BJ (cell line): ENCODE measurements at regions of chr2 and their contacts with region 1.

Region 1: DNA sequence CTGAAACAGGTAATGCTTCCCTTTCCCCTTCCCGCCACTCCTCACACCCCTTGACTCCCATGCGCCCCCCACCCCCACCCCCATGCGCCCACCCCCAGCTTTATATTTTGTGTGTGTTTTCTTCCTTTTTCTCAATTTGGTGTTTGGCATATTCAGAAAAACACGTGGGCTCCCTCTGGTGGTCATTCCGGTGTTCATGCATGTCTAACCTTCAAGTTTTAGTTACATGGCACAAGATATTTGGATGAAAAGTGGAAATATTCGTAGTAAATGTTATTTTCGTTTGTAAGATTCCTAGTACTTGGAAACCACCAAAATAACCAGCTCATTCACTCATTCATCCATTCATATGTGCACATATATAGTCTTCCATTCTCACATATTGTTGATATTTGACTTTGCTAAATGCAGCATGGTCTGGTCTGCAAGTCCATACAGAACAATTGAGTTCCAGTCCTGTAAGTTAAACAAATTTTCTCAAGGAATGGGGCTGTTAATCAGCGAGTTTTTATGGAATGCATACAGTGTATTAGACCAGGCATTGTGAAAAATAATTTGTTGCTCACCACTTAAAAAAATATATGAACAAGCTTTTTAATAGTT is 143.6 kb upstream of the MAP3K20 start:
- DNase-seq: no peak
- H3K4me3 ChIP-seq: no peak overlapping the region
- H3K27me3 ChIP-seq: no peaks in the 10 kb centered on the region
- CTCF ChIP-seq: peak; percentile 72

Region 2: DNA sequence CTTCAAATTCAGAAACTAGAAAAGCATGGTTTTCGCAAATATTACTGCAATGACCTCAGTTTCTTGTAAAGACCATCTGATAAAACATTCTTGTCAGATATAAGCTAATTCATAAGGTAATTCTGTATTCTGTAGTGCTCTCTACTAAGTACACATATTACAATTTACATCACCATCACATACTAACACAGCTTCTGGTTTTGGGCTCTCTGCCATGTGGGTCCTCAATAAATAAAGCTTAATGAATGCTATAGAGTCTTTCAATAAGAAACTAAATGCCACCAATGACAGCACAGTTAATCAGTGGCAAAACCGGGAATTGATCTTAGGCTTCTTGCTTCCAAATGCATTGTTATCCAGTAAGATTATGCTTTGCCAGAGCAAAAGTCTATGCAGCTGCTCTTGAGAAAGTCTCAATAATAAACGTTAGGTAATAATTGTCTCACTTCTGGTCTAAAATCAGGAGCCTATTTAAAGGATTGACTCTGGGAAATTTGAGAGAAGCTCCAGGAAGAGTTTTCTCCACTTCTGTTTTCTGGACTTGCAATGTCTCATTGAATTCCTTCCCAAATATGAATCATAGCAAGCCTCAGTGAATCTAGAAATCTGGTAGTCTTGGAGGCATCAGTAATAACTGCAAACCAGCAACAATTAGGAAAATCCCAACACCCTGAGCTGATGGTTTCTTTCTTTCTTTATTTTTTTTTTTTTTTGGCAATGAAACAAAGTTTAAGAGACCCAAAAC is 264.3 kb before region 1 on chr2:
- CTCF ChIA-PET with region 1: no interaction called
- POLR2A ChIA-PET with region 1: no interaction called
- DNase-seq: no peak
- H3K4me3 ChIP-seq: no peak overlapping the region
- H3K27me3 ChIP-seq: no peaks in the 10 kb centered on the region
- CTCF ChIP-seq: no peak

Region 3: DNA sequence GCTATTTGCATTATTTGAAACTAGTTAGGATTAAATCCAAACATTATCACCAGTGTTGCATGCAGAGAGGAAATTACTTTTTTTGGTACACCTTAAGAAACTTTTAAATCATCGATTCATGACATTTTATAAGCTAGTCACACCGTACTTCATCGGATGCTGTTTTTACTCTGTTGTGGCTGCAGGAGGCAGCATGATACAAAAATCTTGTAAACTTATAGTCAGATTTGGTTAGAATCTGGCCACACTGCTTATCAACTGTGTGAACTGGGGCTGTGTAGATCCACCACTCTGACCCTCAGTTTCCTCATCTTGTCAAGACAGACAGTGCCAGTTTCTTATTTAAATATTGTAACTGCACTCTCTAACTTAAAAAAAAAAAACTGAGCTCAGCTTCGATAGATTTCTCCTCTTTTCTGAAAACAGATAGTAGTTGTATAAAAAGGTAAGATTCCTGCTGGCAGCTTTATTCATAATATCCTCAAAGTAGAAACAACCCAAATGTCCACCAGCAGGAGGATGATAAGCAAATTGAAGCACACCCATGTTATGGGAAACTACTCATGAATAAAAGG is 118.6 kb before region 1 on chr2:
- CTCF ChIA-PET with region 1: interaction called, 88 read pairs
- POLR2A ChIA-PET with region 1: no interaction called
- DNase-seq: no peak
- H3K4me3 ChIP-seq: no peak overlapping the region
- H3K27me3 ChIP-seq: peaks cover 2% of the 10 kb centered on the region
- CTCF ChIP-seq: peak; percentile 60

Region 4: DNA sequence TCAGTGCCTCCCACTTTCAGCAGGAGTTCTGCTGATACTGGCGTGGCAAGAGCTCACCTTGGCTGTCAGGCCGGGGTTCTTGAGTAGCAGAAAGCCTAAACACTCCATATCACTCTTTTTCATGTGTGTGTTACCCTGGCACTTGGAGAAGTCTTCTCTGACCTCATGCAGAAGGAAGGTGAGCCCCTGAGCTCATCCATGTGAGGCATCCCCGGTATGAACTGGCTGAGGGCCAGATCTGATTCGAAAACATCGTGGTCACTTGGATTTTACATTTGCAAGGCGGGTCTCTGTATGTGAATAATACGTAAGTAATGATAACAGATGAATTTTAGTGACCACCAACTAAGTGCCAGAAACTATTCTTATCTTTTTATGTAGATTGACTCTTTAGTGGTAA is 102.8 kb before region 1 on chr2:
- CTCF ChIA-PET with region 1: interaction called, 20 read pairs
- POLR2A ChIA-PET with region 1: no interaction called
- DNase-seq: peak; percentile 64
- H3K4me3 ChIP-seq: no peak overlapping the region
- H3K27me3 ChIP-seq: no peaks in the 10 kb centered on the region
- CTCF ChIP-seq: no peak

Region 5: DNA sequence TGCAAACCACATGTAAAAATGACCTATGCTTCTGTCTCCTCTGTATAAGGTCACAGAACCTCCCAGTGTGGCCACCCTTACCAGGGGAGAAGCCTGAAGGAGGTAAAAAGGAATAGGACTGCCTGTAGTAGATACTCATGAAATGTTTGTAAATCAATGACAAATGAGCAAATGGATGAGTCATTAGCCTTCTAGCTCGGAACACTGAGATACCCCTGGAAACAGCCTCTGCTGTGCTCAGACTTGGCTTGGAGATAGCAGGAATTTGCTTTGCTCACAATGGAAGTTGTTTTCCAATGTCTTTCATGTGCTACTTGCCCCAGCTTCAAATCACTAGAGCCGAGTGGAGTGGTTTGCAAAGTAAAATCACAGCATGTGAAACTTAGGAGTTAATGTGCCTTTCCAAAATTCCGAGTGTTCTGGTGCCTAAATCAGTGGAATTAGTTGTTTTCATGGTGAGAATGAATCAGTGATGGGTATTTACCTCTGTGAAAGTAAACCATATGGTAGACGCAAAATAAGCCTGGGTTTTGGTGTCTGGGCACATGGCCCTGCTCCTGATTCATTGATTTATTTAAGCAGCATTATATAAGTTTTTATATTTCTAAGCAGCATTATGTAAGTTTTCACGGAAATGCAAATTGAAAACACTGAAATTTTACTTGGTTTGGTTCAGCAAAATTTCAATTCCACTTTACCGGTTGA is 10.3 kb before region 1 on chr2:
- CTCF ChIA-PET with region 1: interaction called, 14 read pairs
- POLR2A ChIA-PET with region 1: no interaction called
- DNase-seq: no peak
- H3K4me3 ChIP-seq: no peak overlapping the region
- H3K27me3 ChIP-seq: no peaks in the 10 kb centered on the region
- CTCF ChIP-seq: no peak

Region 6: DNA sequence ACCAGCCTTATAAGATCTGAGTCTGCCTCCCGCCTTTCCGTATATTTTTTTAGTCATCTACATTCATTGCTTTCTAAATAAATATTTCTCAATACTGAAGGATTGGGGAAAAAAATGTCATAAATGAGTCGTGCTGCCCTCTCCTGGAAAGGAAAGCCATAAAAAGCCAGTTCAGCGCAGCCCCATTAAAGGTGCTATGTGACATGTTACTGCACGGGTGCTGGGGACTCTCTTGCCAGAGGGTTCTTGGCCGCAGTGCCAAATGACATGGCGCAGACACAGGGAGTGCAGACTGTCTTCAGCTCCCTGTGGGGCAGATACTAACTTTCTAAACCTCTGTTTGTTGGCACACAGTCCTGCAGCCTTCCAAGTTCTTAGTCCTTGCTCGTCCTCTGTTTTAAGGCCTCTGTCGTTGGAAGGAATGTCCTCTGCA is 89.9 kb after region 1 on chr2:
- CTCF ChIA-PET with region 1: interaction called, 18 read pairs
- POLR2A ChIA-PET with region 1: no interaction called
- DNase-seq: no peak
- H3K4me3 ChIP-seq: no peak overlapping the region
- H3K27me3 ChIP-seq: no peaks in the 10 kb centered on the region
- CTCF ChIP-seq: peak; percentile 57